ENCODE measurements at regions of chr1 and their contacts with region 1.

Region 1: GRCh38 chr1:111720274-111720976 is 18.8 kb downstream of the INKA2 start:
- DNase-seq: no peak

Region 2: GRCh38 chr1:111747282-111747734 is 26.9 kb after region 1 on chr1:
- CTCF ChIA-PET with region 1: interaction called, 17 read pairs
- POLR2A ChIA-PET with region 1: no interaction called
- DNase-seq: peak; percentile 82

Region 3: GRCh38 chr1:111769517-111770146 is 49.2 kb after region 1 on chr1:
- CTCF ChIA-PET with region 1: interaction called, 28 read pairs
- POLR2A ChIA-PET with region 1: no interaction called
- DNase-seq: peak; percentile 62

Measured in HEK293T (cell line).